ENCODE measurements at regions of chr18 and their contacts with region 1.

Region 1: GRCh38 chr18:62437235-62438017 is 85.4 kb upstream of the ZCCHC2 start:
- DNase-seq: peak; percentile 91
- H3K4me3 ChIP-seq: peak overlapping the region in 2 of 3 experiments; percentile 1 to 28
- H3K27ac ChIP-seq: peak overlapping the region; percentile 73
- H3K4me1 ChIP-seq: peaks cover 20% of the 10 kb centered on the region
- H3K27me3 ChIP-seq: no peaks in the 10 kb centered on the region
- CTCF ChIP-seq: no peak

Region 2: DNA sequence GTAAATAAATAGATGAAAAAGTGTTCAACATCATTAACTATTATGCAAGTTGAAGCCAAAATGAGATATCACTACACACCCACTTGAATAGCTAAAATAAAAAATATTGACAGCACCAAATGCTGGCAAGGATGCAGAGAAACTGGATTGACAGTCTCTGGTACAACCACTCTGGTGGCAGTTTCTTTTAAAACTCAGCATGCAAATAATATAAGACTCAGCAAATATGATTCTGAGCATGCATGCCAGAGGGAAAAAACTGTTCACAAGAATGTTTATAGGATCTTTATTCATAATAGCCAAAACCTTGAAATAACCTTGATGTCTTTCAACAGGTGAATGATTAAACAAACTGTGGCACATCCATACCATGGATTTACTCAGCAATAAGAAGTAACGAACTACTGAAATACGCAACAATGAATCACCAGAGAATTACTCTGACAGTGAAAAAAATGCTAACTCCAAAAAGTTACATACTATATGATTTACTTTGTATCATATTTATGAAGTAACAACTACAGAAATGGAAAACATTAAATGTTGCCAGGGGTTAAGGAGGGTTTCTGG is 382.4 kb before region 1 on chr18:
- CTCF ChIA-PET with region 1: no interaction called
- dilution Hi-C with region 1: no loop called
- in situ Hi-C with region 1: no loop called
- intact Hi-C with region 1: no loop called
- DNase-seq: no peak
- H3K4me3 ChIP-seq: no peak overlapping the region
- H3K27ac ChIP-seq: no peak overlapping the region
- H3K4me1 ChIP-seq: no peaks in the 10 kb centered on the region
- H3K27me3 ChIP-seq: no peaks in the 10 kb centered on the region
- CTCF ChIP-seq: no peak

Region 3: GRCh38 chr18:62485684-62486083 is 48.3 kb after region 1 on chr18:
- CTCF ChIA-PET with region 1: no interaction called
- dilution Hi-C with region 1: no loop called
- in situ Hi-C with region 1: no loop called
- intact Hi-C with region 1: loop called (anchors 1 kb)
- DNase-seq: peak; percentile 96
- H3K4me3 ChIP-seq: peak overlapping the region in 1 of 3 experiments; percentile 20
- H3K27ac ChIP-seq: peak overlapping the region; percentile 88
- H3K4me1 ChIP-seq: peaks cover 20% of the 10 kb centered on the region
- H3K27me3 ChIP-seq: no peaks in the 10 kb centered on the region
- CTCF ChIP-seq: no peak

Region 4: DNA sequence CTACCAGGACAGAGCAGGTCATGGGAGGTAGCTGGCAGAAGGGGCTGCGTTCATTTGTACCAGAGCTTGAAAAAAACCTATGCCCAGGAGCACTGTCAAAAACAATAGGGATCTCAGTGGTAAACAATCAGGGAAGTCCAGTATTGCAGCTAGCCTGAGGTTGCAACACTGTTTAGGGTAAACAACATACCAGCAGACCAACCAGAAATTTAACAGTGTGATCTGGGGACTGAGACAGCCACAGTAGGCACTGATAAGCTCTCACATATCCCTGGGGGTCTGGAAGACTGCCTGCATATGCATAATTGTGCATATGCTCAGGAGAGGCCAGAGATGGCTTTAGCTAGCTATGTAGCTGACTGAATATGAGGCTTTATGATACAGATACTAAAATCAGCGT is 73.4 kb after region 1 on chr18:
- CTCF ChIA-PET with region 1: no interaction called
- dilution Hi-C with region 1: loop called (anchors 5 kb)
- in situ Hi-C with region 1: no loop called
- intact Hi-C with region 1: no loop called
- DNase-seq: no peak
- H3K4me3 ChIP-seq: no peak overlapping the region
- H3K27ac ChIP-seq: no peak overlapping the region
- H3K4me1 ChIP-seq: peaks cover 3% of the 10 kb centered on the region
- H3K27me3 ChIP-seq: no peaks in the 10 kb centered on the region
- CTCF ChIP-seq: no peak

Region 5: DNA sequence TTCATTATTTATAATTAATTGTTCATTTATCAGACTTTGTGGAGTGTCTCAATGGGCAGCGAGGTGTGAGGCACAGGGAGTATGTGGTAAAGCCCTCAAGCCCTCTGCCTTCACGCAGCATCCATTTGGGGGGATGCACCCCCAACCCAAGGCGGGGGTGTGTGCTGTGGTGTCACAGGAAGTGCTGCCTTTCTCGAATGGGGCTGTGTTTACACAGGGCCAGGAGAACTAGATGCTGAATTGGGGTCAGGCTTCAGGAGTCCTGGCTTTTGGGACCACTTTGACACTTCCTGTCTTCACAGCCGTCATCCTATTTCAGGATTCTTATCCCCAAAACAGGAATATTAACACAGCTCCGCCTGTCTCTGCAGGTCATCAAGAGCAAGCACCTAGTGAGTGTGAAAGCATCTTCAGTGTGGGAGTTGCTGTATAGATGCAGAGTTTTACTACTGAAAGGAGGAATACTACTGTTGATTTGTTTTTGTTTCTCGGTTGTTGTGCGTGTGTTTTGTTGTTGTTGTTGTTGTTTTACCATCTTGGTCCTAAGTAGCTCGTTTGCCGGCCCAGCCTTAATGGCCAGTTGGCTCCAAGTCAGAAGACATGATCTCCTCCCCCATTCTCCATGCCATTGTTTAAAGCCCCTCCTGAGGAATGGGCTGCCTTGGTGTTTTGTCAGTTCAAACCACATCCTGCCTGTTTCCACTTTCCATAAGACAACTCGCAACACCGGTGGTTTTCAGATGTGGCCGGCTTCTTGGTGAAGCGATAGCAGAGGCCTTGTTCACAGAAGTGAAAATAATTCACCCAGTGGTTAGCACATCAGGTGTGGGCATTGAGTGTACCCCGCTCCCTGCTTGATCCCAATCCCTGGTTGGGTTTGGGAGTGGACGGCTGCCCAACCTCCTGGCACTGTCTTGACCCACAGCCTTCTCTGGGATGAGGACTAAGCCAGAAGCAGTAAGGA is 660.9 kb after region 1 on chr18:
- CTCF ChIA-PET with region 1: no interaction called
- dilution Hi-C with region 1: no loop called
- in situ Hi-C with region 1: no loop called
- intact Hi-C with region 1: no loop called
- DNase-seq: no peak
- H3K4me3 ChIP-seq: no peak overlapping the region
- H3K27ac ChIP-seq: no peak overlapping the region
- H3K4me1 ChIP-seq: no peaks in the 10 kb centered on the region
- H3K27me3 ChIP-seq: no peaks in the 10 kb centered on the region
- CTCF ChIP-seq: no peak